ENCODE measurements at regions of chr2 and their contacts with region 1.

Region 1: DNA sequence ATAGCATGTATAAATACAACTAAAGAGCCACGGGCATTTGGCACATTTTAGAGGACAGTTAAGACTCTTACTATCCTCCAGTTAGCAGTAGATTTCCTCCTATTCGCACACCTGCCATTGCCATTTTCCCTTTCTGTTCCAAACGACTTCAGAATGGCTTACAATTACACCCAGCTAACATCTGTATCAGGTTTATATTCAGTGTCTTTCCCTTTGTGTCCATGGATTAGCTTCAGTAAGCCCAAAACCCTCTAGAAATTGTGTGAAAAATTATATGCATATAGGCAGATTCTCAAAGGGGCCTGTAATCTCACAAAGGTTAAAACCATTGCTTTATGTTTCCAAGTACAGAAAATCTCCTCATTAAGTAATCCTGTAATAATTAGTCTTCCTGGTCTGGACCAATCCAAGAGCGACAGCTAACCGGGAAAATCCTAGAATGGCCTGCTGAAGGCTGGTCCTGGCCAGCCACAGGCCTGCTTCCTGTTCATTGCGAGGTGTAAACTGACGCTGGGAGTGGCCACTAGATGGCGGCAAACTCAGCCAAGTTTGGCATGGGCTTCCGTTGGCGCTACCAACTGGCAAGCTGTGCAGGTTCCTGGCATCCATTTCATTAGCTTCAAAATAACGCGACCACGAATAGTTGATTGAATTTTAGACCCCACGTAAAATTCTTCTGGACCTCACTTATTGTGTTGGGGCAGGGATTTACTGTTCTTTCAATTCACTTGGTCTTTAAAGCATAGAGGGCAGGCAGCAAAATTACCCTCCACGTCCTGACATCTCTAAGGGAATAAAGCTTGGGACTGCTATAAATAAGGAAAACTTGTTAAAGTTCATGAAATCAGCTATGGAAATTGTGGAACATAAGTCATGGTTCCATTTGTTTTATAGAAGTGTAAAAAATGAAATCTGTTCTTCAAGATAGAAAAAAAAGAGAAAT is 17.1 kb downstream of the ARHGAP25 start:
- DNase-seq: peak; percentile 93
- ATAC-seq: peak; percentile 95
- H3K4me3 Mint-ChIP-seq: no peak overlapping the region
- H3K27ac Mint-ChIP-seq: 0 out of 2 replicates have a peak overlapping the region, but pooled peaks have one; percentile 41
- H3K4me1 Mint-ChIP-seq: peaks cover 16% of the 10 kb centered on the region
- H3K27me3 Mint-ChIP-seq: no peaks in the 10 kb centered on the region
- CTCF ChIP-seq: peak; percentile 84

Region 2: GRCh38 chr2:68620772-68621171 is 130.9 kb before region 1 on chr2:
- CTCF ChIA-PET with region 1: no interaction called
- POLR2A ChIA-PET with region 1: no interaction called
- DNase-seq: no peak
- ATAC-seq: no peak
- H3K4me3 Mint-ChIP-seq: no peak overlapping the region
- H3K27ac Mint-ChIP-seq: no peak overlapping the region
- H3K4me1 Mint-ChIP-seq: no peaks in the 10 kb centered on the region
- H3K27me3 Mint-ChIP-seq: no peaks in the 10 kb centered on the region
- CTCF ChIP-seq: no peak

Region 3: DNA sequence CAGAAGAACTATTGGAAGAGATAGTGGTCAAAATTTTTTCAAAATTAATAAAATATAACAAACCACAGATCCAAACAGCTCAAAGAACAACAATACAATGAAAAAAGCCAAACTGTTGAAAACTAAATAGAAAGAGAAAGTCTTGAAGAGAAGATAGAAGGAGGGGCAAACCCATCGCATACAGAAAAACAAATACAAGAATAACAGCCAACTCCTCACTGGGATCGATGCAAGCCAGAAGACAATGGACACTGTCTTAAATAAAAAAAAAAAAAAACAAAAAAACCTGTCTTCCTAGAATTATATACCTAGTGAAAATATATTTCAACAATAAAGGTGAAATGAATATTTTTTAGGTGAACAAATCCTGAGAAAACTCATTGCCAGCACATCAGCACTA is 51.1 kb before region 1 on chr2:
- CTCF ChIA-PET with region 1: no interaction called
- POLR2A ChIA-PET with region 1: no interaction called
- DNase-seq: no peak
- ATAC-seq: no peak
- H3K4me3 Mint-ChIP-seq: no peak overlapping the region
- H3K27ac Mint-ChIP-seq: no peak overlapping the region
- H3K4me1 Mint-ChIP-seq: peaks cover 20% of the 10 kb centered on the region
- H3K27me3 Mint-ChIP-seq: no peaks in the 10 kb centered on the region
- CTCF ChIP-seq: no peak

Region 4: DNA sequence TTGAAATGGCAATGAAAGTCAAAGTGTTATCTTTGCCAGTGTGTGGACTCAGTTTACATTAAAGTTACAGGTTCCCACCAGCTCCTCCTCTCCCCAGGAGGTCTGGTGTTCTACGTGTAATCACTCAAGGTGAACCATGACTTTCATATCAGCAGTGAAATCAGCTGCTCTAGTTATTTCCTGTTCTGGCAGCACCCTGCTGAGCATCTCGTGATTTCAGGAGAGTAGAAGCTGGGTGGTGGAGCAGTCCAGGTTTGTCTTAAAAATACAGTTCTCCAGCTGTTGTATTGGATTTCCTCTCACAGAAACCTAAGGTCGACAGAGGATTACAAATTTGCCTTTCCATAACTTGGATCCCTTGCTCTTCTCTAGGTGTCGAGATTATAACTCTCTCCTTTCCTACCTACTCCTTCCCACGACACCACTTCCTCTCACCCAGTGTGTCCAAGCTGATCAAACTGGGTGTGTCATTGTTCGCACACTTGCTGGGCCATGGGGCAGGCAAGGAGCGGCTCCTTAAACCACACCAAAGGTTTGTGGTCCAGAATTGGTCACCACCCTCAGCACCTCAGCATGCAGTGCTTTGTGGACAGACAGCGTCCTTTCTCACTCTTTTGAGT is 30.1 kb before region 1 on chr2:
- CTCF ChIA-PET with region 1: interaction called, 27 read pairs
- POLR2A ChIA-PET with region 1: no interaction called
- DNase-seq: no peak
- ATAC-seq: no peak
- H3K4me3 Mint-ChIP-seq: no peak overlapping the region
- H3K27ac Mint-ChIP-seq: no peak overlapping the region
- H3K4me1 Mint-ChIP-seq: peaks cover 8% of the 10 kb centered on the region
- H3K27me3 Mint-ChIP-seq: no peaks in the 10 kb centered on the region
- CTCF ChIP-seq: no peak

Region 5: GRCh38 chr2:68766376-68766845 is 14.7 kb after region 1 on chr2:
- CTCF ChIA-PET with region 1: interaction called, 38 read pairs
- POLR2A ChIA-PET with region 1: no interaction called
- DNase-seq: no peak
- ATAC-seq: peak; percentile 52
- H3K4me3 Mint-ChIP-seq: no peak overlapping the region
- H3K27ac Mint-ChIP-seq: 0 out of 2 replicates have a peak overlapping the region, but pooled peaks have one; percentile 35
- H3K4me1 Mint-ChIP-seq: peaks cover 42% of the 10 kb centered on the region
- H3K27me3 Mint-ChIP-seq: no peaks in the 10 kb centered on the region
- CTCF ChIP-seq: no peak

Region 6: GRCh38 chr2:68791914-68792313 is 40.2 kb after region 1 on chr2:
- CTCF ChIA-PET with region 1: interaction called, 13 read pairs
- POLR2A ChIA-PET with region 1: no interaction called
- DNase-seq: no peak
- ATAC-seq: no peak
- H3K4me3 Mint-ChIP-seq: no peak overlapping the region
- H3K27ac Mint-ChIP-seq: no peak overlapping the region
- H3K4me1 Mint-ChIP-seq: peaks cover 4% of the 10 kb centered on the region; the same call in 1 of the 2 replicates
- H3K27me3 Mint-ChIP-seq: peaks cover 3% of the 10 kb centered on the region; the same call in 1 of the 2 replicates
- CTCF ChIP-seq: no peak

Region 7: DNA sequence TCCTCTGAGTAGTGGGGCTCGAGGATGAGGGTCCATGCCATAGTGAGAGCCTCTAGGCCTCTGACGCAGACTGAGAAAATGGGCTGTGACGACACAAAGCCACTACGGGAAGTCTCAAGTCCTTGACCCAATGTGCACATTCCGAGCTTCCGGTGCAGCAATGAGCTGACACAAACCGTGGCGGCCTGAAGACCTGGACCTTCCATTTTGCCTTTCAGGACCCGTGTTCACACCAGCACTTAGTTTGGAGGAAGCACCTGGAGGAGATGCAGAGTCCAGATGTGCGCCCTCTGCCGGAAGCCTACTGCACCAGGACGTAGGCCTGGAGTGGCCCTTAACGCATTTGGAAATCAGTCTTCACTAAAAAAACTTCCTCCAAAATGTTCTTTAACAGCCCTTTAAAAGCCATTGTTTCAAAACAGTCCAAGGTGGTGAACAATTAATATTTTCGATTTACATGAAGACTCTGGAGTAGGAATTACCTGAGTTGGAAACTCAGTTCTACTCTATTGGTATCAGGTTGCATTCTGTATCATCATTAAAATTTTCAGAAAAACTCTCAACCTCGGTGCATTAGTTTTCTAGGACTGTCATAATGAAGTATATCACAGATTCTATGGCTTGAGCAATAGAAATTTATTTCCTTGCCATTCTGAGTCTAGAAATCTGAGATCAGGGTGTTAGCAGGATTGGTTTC is 85.6 kb after region 1 on chr2:
- CTCF ChIA-PET with region 1: interaction called, 71 read pairs
- POLR2A ChIA-PET with region 1: no interaction called
- DNase-seq: peak; percentile 84
- ATAC-seq: peak; percentile 94
- H3K4me3 Mint-ChIP-seq: no peak overlapping the region
- H3K27ac Mint-ChIP-seq: no peak overlapping the region
- H3K4me1 Mint-ChIP-seq: peaks cover 5% of the 10 kb centered on the region; the same call in 1 of the 2 replicates
- H3K27me3 Mint-ChIP-seq: no peaks in the 10 kb centered on the region
- CTCF ChIP-seq: no peak

Region 8: GRCh38 chr2:68909793-68910674 is 158.4 kb after region 1 on chr2:
- CTCF ChIA-PET with region 1: interaction called, 13 read pairs
- POLR2A ChIA-PET with region 1: no interaction called
- DNase-seq: peak; percentile 80
- ATAC-seq: peak; percentile 63
- H3K4me3 Mint-ChIP-seq: no peak overlapping the region
- H3K27ac Mint-ChIP-seq: peak overlapping the region; percentile 85
- H3K4me1 Mint-ChIP-seq: peaks cover 27% of the 10 kb centered on the region
- H3K27me3 Mint-ChIP-seq: no peaks in the 10 kb centered on the region
- CTCF ChIP-seq: peak; percentile 90

Region 9: GRCh38 chr2:68943581-68944568 is 192.2 kb after region 1 on chr2:
- CTCF ChIA-PET with region 1: interaction called, 13 read pairs
- POLR2A ChIA-PET with region 1: no interaction called
- DNase-seq: peak; percentile 70
- ATAC-seq: peak; percentile 93
- H3K4me3 Mint-ChIP-seq: peak overlapping the region; percentile 70
- H3K27ac Mint-ChIP-seq: no peak overlapping the region
- H3K4me1 Mint-ChIP-seq: peaks cover 12% of the 10 kb centered on the region
- H3K27me3 Mint-ChIP-seq: peaks cover 9% of the 10 kb centered on the region
- CTCF ChIP-seq: peak; percentile 73

Measured in WTC11 (cell line).